Activated CD8-positive, alpha-beta T cell treated with anti-CD3 and anti-CD28 coated beads, Interleukin-2, amount 10 ng/mL, durations not matched to agents 7 days and 5 days (primary cell): ENCODE measurements at regions of chr2 and their contacts with region 1.

Region 1: DNA sequence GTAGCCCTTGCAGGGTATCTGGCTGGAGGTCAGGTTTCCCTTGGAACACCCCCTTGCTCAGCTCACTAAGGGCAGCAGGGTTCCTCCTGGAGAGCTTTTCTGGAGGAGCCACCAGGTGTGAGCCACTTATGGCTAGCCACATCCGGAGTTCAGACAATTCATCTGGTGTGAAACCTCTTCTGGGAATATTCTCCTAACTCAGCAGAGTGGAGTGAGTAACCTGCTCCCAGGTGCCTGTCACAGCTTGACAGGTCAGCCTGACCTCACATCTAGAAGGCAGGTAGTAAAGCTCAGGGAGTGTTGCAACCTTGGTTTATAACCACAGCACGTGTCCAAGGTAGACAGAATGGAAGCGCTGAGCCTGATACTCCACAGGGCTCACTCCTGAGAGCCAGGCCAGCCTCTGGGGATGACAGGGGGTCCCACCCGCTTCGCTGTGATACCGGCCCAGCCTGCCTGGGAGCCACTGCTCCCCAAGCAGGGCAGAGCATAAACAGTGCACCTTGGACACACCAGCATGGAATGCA is 62.6 kb upstream of the TGFA start:
- DNase-seq: no peak
- ATAC-seq: no peak
- H3K4me3 Mint-ChIP-seq: no peak overlapping the region
- H3K27ac Mint-ChIP-seq: no peak overlapping the region
- H3K4me1 Mint-ChIP-seq: peaks cover 5% of the 10 kb centered on the region
- H3K27me3 Mint-ChIP-seq: peaks cover 16% of the 10 kb centered on the region

Region 2: DNA sequence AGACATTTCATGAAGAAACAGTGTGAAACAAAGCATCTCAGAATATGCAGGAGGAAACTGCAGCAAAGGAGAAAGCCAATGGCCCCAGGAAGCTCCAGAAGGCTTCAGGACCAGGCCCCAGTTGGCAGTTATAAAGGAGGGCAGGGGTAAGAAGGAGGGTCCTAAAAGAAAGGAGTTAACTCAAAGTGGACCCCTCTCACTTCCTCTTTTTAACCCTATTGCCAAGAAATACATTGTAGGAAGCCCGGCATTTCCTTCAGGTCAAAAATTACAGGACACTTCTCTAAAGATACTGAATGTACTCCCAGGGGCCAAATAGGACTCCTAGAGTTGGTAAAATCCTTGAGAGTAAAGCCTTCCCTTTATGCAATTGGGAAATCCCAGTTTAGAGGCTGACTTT is 14.5 kb after region 1 on chr2:
- CTCF ChIA-PET with region 1: interaction called, 14 read pairs
- POLR2A ChIA-PET with region 1: interaction called, 4 read pairs
- DNase-seq: no peak
- ATAC-seq: no peak
- H3K4me3 Mint-ChIP-seq: no peak overlapping the region
- H3K27ac Mint-ChIP-seq: no peak overlapping the region
- H3K4me1 Mint-ChIP-seq: no peaks in the 10 kb centered on the region
- H3K27me3 Mint-ChIP-seq: peaks cover 27% of the 10 kb centered on the region